SK-N-SH (cell line): ENCODE measurements at regions of chr13 and their contacts with region 1.

Region 1: GRCh38 chr13:36981156-36981743 is 17.9 kb downstream of the ALG5 start:
- DNase-seq: peak; percentile 50
- H3K4me3 ChIP-seq: no peak overlapping the region; a peak in 1 of 4 replicates
- H3K27ac ChIP-seq: no peak overlapping the region
- H3K4me1 ChIP-seq: peaks cover 0 to 7% of the 10 kb centered on the region in 2 experiments; a peak in 1 of 4 replicates
- H3K27me3 ChIP-seq: no peaks in the 10 kb centered on the region
- CTCF ChIP-seq: peak; percentile 75
- EP300 ChIP-seq: no peak
- RAD21 ChIP-seq: peak; percentile 84

Region 2: GRCh38 chr13:36858290-36858689 is 123.0 kb before region 1 on chr13:
- CTCF ChIA-PET with region 1: interaction called, 275 read pairs
- POLR2A ChIA-PET with region 1: interaction called, 5 read pairs
- DNase-seq: peak; percentile 53
- H3K4me3 ChIP-seq: no peak overlapping the region
- H3K27ac ChIP-seq: no peak overlapping the region
- H3K4me1 ChIP-seq: peaks cover 0 to 8% of the 10 kb centered on the region in 2 experiments; a peak in 1 of 4 replicates
- H3K27me3 ChIP-seq: no peaks in the 10 kb centered on the region
- CTCF ChIP-seq: peak; percentile 66
- EP300 ChIP-seq: no peak
- RAD21 ChIP-seq: peak; percentile 82

Region 3: GRCh38 chr13:36872621-36873020 is 108.6 kb before region 1 on chr13:
- CTCF ChIA-PET with region 1: interaction called, 11 read pairs
- POLR2A ChIA-PET with region 1: no interaction called
- DNase-seq: no peak
- H3K4me3 ChIP-seq: no peak overlapping the region
- H3K27ac ChIP-seq: no peak overlapping the region
- H3K4me1 ChIP-seq: peaks cover 7 to 9% of the 10 kb centered on the region in 2 experiments; a peak in 3 of 4 replicates
- H3K27me3 ChIP-seq: no peaks in the 10 kb centered on the region
- CTCF ChIP-seq: no peak
- EP300 ChIP-seq: no peak
- RAD21 ChIP-seq: no peak

Region 4: GRCh38 chr13:36950920-36951319 is 30.3 kb before region 1 on chr13:
- CTCF ChIA-PET with region 1: interaction called, 14 read pairs
- POLR2A ChIA-PET with region 1: no interaction called
- DNase-seq: no peak
- H3K4me3 ChIP-seq: no peak overlapping the region
- H3K27ac ChIP-seq: no peak overlapping the region
- H3K4me1 ChIP-seq: no peaks in the 10 kb centered on the region; a peak in 2 of 4 replicates
- H3K27me3 ChIP-seq: no peaks in the 10 kb centered on the region
- CTCF ChIP-seq: no peak
- EP300 ChIP-seq: no peak
- RAD21 ChIP-seq: no peak

Region 5: DNA sequence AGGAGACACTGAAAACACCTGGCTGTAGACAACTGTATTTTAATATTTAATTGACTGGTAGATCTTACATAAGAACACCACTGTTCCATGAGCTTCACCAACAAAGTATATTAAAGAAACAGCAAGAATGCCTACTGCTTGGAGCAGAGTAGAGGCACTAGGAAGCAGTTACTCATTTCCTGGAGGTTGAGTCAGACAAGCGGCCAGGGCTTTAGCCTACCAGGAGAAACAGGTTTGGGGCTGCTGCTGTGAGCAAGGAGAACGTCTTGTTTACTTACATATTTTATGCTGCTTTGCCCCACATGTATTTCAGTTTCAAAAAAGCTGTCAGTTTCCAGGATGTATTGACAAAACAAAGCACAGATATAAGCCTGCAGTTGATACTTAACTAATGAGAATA is 15.5 kb before region 1 on chr13:
- CTCF ChIA-PET with region 1: interaction called, 28 read pairs
- POLR2A ChIA-PET with region 1: no interaction called
- DNase-seq: no peak
- H3K4me3 ChIP-seq: no peak overlapping the region
- H3K27ac ChIP-seq: peak overlapping the region in 1 of 2 experiments; percentile 79; a peak in 2 of 4 replicates
- H3K4me1 ChIP-seq: peaks cover 0 to 15% of the 10 kb centered on the region in 2 experiments; a peak in 1 of 4 replicates
- H3K27me3 ChIP-seq: no peaks in the 10 kb centered on the region
- CTCF ChIP-seq: no peak
- EP300 ChIP-seq: no peak
- RAD21 ChIP-seq: no peak

Region 6: GRCh38 chr13:36992340-36992739 is 11.1 kb after region 1 on chr13:
- CTCF ChIA-PET with region 1: interaction called, 50 read pairs
- POLR2A ChIA-PET with region 1: no interaction called
- DNase-seq: no peak
- H3K4me3 ChIP-seq: no peak overlapping the region
- H3K27ac ChIP-seq: no peak overlapping the region
- H3K4me1 ChIP-seq: peaks cover 0 to under 1% of the 10 kb centered on the region in 2 experiments; a peak in 2 of 4 replicates
- H3K27me3 ChIP-seq: no peaks in the 10 kb centered on the region
- CTCF ChIP-seq: no peak
- EP300 ChIP-seq: no peak
- RAD21 ChIP-seq: no peak

Region 7: DNA sequence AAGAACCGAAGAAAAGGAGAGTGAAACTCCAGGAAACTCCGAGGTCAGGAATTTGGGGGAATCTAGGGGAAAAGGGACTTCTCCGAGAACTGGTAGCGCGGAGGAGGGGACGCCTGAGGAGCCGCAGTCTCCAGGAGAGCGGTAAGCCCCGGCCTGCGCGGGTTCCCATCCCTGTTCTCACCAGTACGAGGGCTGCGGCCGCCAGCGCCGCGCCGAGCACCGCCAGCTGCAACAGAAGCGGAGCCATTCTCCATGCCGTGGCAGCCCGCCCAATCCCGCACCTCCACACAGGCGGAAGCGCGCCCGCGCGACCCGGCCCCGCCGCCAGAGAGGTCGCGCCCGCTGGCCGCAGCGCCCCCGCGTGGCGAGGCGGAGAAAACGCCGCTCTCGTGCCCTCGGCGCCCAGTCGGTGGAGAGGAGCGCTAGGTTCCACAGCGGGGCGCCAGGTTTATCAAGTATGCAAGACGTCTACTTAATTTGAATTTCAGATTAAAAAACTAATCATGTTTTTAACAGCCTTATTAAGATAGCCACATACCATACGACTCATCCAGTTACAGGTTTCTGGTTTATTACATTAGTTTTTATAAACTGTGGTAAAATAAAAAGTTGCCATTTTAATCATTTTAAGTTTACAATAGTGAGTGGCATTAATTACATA is 17.9 kb after region 1 on chr13 and contains the start of gene ALG5:
- CTCF ChIA-PET with region 1: interaction called, 50 read pairs
- POLR2A ChIA-PET with region 1: no interaction called
- DNase-seq: peak; percentile 93
- H3K4me3 ChIP-seq: peak within 1 kb of the TSS; percentile 96 to 98
- H3K27ac ChIP-seq: peak within 1 kb of the TSS; percentile 91 to 98
- H3K4me1 ChIP-seq: peaks cover 9 to 13% of the 10 kb centered on the region in 2 experiments; a peak in 3 of 4 replicates
- H3K27me3 ChIP-seq: no peaks in the 10 kb centered on the region
- CTCF ChIP-seq: peak; percentile 95
- EP300 ChIP-seq: peak in 1 of 2 experiments; percentile 25; a peak in 1 of 4 replicates
- RAD21 ChIP-seq: peak; percentile 35; the same call in 1 of the 2 replicates
- polyA plus RNA-seq, gene ALG5: 24.2 and 30.4 TPM in 2 replicates